Panc1 (cell line): ENCODE measurements at regions of chr12 and their contacts with region 1.

Region 1: GRCh38 chr12:56206457-56207166 is 15.1 kb downstream of the RNF41 start:
- DNase-seq: no peak
- ATAC-seq: peak; percentile 89
- H3K4me3 ChIP-seq: no peak overlapping the region
- H3K27ac ChIP-seq: no peak overlapping the region
- H3K4me1 ChIP-seq: peaks cover 3% of the 10 kb centered on the region; the same call in 1 of the 2 replicates
- H3K27me3 ChIP-seq: no peaks in the 10 kb centered on the region
- CTCF ChIP-seq: peak; percentile 86

Region 2: GRCh38 chr12:55073043-55074022 is 1133.3 kb before region 1 on chr12:
- CTCF ChIA-PET with region 1: no interaction called
- POLR2A ChIA-PET with region 1: no interaction called
- in situ Hi-C with region 1: no loop called
- intact Hi-C with region 1: no loop called
- DNase-seq: peak; percentile 39
- ATAC-seq: peak; percentile 79; the same call in 1 of the 2 replicates
- H3K4me3 ChIP-seq: no peak overlapping the region
- H3K27ac ChIP-seq: no peak overlapping the region
- H3K4me1 ChIP-seq: no peaks in the 10 kb centered on the region
- H3K27me3 ChIP-seq: peaks cover 3% of the 10 kb centered on the region; the same call in 1 of the 2 replicates
- CTCF ChIP-seq: peak; percentile 79

Region 3: GRCh38 chr12:56146492-56147460 is 59.8 kb before region 1 on chr12:
- CTCF ChIA-PET with region 1: no interaction called
- POLR2A ChIA-PET with region 1: interaction called, 12 read pairs
- in situ Hi-C with region 1: no loop called
- intact Hi-C with region 1: no loop called
- DNase-seq: no peak
- ATAC-seq: no peak
- H3K4me3 ChIP-seq: no peak overlapping the region
- H3K27ac ChIP-seq: no peak overlapping the region
- H3K4me1 ChIP-seq: peaks cover 9% of the 10 kb centered on the region; the same call in 1 of the 2 replicates
- H3K27me3 ChIP-seq: no peaks in the 10 kb centered on the region
- CTCF ChIP-seq: no peak